Naive thymus-derived CD8-positive, alpha-beta T cell (primary cell): ENCODE measurements at regions of chr6 and their contacts with region 1.

Region 1: DNA sequence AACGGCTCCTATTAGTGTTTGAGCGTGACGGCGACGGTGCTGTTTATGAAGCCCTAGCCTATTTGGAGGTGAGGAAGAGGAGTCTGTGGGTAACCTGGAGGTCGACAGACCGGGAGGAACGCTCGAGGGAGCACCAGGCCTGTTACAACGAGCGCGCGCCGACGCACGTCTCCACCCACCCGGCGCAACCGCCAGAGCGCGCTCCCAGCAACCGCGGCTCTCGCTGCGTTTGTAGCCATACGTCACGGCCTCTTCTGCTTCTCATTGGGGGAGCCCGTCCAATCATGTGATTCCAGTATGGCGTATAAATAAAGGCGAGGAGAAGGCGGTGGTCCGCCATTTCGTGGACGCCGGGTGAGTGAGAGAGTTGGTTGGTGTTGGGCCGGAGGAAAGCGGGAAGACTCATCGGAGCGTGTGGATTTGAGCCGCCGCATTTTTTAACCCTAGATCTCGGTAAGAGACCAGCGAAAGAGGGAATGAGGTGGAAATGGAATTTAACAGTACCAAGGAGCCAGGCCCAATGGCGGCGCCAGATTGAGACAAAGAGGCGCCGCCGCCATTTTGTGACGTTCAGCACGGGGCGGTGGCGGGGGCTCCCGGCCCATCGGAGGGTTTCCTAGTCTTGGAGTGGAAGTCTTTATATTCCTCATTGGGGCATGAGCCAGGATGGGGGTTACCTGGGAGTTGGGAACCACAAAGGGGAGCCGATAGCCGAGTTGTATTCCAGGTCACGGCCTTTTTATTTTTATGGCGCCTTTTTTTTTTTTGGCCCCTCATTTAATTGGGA is at the start of gene SRSF3:
- DNase-seq: peak; percentile 90 to 99 (median 97)
- ATAC-seq: peak; percentile 84 to 87
- H3K4me3 Mint-ChIP-seq: peak within 1 kb of the TSS; percentile 89 to 100 (median 98)
- H3K27ac Mint-ChIP-seq: peak within 1 kb of the TSS; percentile 96 to 100 (median 100)
- H3K4me1 Mint-ChIP-seq: peaks cover 20 to 49% (median 42%) of the 10 kb centered on the region in 4 donors
- H3K27me3 Mint-ChIP-seq: peaks cover 0 to 4% (median 0%) of the 10 kb centered on the region in 5 donors
- polyA plus RNA-seq, gene SRSF3: 268 to 375 (median 332) TPM

Region 2: DNA sequence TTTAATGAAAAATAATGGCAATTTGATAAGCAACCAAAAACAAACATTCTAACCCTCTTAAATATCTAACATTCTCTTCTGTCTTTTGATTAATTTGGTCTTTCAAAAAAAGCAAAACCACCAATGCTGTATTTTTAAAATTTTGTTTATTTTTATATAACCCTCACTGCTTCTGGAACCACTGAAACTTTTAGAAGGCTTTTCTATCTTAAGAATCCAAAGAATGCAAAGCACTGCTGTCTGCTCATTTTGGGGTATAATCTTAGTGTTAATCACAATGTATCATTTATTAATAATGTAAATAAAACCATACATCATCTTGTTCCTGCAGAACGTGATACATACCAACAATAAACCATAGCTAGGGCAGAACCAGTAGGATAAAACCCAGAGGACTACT is 60.9 kb before region 1 on chr6:
- POLR2A ChIA-PET with region 1: interaction called, 29 read pairs
- DNase-seq: no peak
- ATAC-seq: no peak
- H3K4me3 Mint-ChIP-seq: peak overlapping the region in 6 of 10 donors; percentile 24 to 52 (median 39)
- H3K27ac Mint-ChIP-seq: peak overlapping the region in 8 of 10 donors; percentile 27 to 82 (median 60)
- H3K4me1 Mint-ChIP-seq: peaks cover 22 to 83% (median 77%) of the 10 kb centered on the region in 4 donors
- H3K27me3 Mint-ChIP-seq: no peaks in the 10 kb centered on the region

Region 3: GRCh38 chr6:36546920-36547645 is 47.1 kb before region 1 on chr6 and contains the start of gene STK38:
- POLR2A ChIA-PET with region 1: interaction called, 353 read pairs
- DNase-seq: peak; percentile 82 to 95 (median 90)
- ATAC-seq: peak; percentile 69 to 78
- H3K4me3 Mint-ChIP-seq: peak within 1 kb of the TSS; percentile 93 to 100 (median 99)
- H3K27ac Mint-ChIP-seq: peak within 1 kb of the TSS; percentile 96 to 99 (median 98)
- H3K4me1 Mint-ChIP-seq: peaks cover 12 to 54% (median 41%) of the 10 kb centered on the region in 4 donors
- H3K27me3 Mint-ChIP-seq: no peaks in the 10 kb centered on the region
- polyA plus RNA-seq, gene STK38: 46.4 to 79.6 (median 52.8) TPM

Region 4: GRCh38 chr6:36572987-36573311 is 21.3 kb before region 1 on chr6:
- POLR2A ChIA-PET with region 1: no interaction called
- DNase-seq: no peak
- ATAC-seq: no peak
- H3K4me3 Mint-ChIP-seq: no peak overlapping the region
- H3K27ac Mint-ChIP-seq: no peak overlapping the region
- H3K4me1 Mint-ChIP-seq: peaks cover 0 to under 1% (median 0%) of the 10 kb centered on the region in 4 donors
- H3K27me3 Mint-ChIP-seq: no peaks in the 10 kb centered on the region

Region 5: GRCh38 chr6:36608788-36609563 is 14.8 kb after region 1 on chr6:
- POLR2A ChIA-PET with region 1: interaction called, 67 read pairs
- DNase-seq: peak in 1 of 10 donors; percentile 3
- ATAC-seq: peak in 1 of 2 donors; percentile 2
- H3K4me3 Mint-ChIP-seq: peak overlapping the region in 5 of 10 donors; percentile 3 to 28 (median 4)
- H3K27ac Mint-ChIP-seq: peak overlapping the region; percentile 9 to 90 (median 77)
- H3K4me1 Mint-ChIP-seq: peaks cover 26 to 70% (median 62%) of the 10 kb centered on the region in 4 donors
- H3K27me3 Mint-ChIP-seq: no peaks in the 10 kb centered on the region

Region 6: GRCh38 chr6:36615018-36615761 is 21.0 kb after region 1 on chr6:
- POLR2A ChIA-PET with region 1: interaction called, 67 read pairs
- DNase-seq: peak in 8 of 10 donors; percentile 14 to 70 (median 42)
- ATAC-seq: peak; percentile 52 to 73
- H3K4me3 Mint-ChIP-seq: no peak overlapping the region
- H3K27ac Mint-ChIP-seq: peak overlapping the region in 8 of 10 donors; percentile 18 to 76 (median 70)
- H3K4me1 Mint-ChIP-seq: peaks cover 9 to 30% (median 25%) of the 10 kb centered on the region in 4 donors
- H3K27me3 Mint-ChIP-seq: no peaks in the 10 kb centered on the region